Activated T-helper 2 cell treated with anti-CD3 and anti-CD28 coated beads, Interferon-gamma antibody, Interleukin-2, Interleukin-4, amounts not matched to agents 10 μg/mL and 5 μg/mL and 100 μg/mL, durations not matched to agents 14 hours and 24 hours and 36 hours (primary cell): ENCODE measurements at regions of chr1 and their contacts with region 1.

Region 1: GRCh38 chr1:228794173-228794572 is 58.9 kb downstream of the RHOU start:
- DNase-seq: peak; percentile 45
- H3K4me3 Mint-ChIP-seq: no peak overlapping the region
- H3K27ac Mint-ChIP-seq: no peak overlapping the region
- H3K4me1 Mint-ChIP-seq: peaks cover 24% of the 10 kb centered on the region
- H3K27me3 Mint-ChIP-seq: no peaks in the 10 kb centered on the region

Region 2: DNA sequence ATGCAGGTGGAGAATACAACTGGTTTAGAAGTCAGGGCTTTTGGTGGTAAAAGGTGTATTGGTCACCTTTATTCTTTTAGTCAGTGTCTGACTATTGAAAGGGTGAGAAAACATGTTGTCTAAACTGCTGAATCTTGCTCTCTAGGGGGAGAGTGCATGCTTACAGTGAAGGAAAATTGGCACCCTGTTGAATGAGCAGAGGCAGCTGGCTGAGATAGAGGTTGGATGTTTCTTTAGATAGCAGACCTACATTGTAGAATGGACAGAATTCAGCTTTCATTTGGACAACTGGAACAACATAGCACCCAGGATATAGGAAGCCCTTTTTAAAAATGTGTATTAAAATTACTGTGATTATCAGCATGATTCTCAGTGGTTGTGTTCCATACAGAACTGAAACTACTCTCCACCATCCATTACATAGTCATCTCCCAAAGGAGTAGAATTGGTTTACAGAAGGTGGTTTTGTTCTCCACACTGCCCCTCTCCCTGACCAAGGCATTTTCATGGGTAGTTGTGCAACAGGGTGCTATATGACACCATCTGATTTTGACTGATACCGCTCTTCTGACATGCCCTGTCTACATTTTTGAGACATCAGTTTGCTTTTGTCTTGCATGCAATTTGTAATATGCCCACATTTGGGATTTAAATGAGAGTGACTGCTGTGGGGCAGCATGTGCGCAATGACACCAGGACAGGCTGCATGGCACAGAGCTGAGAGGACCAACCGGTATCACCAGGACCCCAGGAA is 42.6 kb before region 1 on chr1:
- intact Hi-C with region 1: loop called (anchors 1 kb)
- DNase-seq: no peak
- H3K4me3 Mint-ChIP-seq: no peak overlapping the region
- H3K27ac Mint-ChIP-seq: no peak overlapping the region
- H3K4me1 Mint-ChIP-seq: peaks cover 38% of the 10 kb centered on the region
- H3K27me3 Mint-ChIP-seq: peaks cover 31% of the 10 kb centered on the region

Region 3: DNA sequence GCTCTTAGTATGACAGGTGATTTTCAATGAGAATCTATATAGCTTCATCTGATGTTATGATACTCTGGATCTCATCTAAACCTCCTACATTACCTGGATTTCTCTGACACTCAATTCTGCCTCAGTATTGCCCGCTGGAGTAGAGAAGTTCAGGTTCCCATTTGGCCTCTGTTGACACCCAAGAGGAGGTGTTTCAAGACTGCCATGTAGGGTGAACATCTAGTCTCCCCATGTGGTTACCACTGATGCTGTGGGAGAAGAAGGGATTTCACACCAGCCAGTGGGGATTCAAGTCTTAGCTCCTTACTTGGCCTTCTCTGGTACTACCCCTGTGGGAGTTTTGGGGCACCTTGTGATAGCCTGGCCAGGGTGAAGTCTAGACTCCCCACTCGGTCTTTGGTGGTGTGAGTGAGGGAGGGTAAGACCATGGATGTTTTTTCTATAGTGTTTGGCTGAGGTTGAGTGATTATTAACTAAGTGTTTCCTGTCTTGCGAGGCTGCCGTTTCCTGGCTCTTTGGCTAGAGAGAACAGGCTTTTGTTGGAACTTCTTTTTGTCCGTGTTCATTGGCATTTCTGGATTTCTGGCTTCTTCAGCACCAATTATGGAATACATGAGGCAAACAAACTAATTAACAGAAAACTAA is 31.8 kb after region 1 on chr1:
- intact Hi-C with region 1: loop called (anchors 5 kb)
- DNase-seq: no peak
- H3K4me3 Mint-ChIP-seq: no peak overlapping the region
- H3K27ac Mint-ChIP-seq: no peak overlapping the region
- H3K4me1 Mint-ChIP-seq: peaks cover 19% of the 10 kb centered on the region
- H3K27me3 Mint-ChIP-seq: peaks cover 28% of the 10 kb centered on the region

Region 4: DNA sequence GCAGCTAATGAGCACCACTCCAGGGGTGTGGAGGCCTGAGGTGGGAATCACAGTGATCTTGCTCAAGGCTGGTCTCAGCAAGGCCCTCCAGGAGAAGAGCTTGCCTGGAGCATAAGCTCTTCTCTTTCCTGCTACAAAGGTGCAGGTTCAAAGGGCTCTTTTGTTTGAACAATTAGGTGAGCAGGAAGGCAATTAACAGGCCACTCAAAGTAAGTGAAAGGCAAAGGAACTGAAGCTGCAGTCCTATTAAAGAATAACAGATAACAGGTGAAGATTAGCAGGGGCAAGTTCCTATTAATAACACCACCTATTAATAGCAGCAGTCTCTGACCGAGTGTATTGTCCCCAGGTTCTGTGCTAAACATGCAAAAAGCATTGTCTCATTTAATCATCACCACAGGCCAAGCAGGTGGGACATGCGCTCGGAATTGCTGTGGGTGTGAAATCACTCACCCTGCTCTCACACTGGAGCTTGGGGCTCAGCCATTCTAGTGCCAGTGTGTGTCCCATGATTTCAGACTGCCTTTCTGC is 54.9 kb after region 1 on chr1:
- intact Hi-C with region 1: no loop called
- DNase-seq: no peak
- H3K4me3 Mint-ChIP-seq: no peak overlapping the region
- H3K27ac Mint-ChIP-seq: no peak overlapping the region
- H3K4me1 Mint-ChIP-seq: no peaks in the 10 kb centered on the region
- H3K27me3 Mint-ChIP-seq: peaks cover 24% of the 10 kb centered on the region

Region 5: DNA sequence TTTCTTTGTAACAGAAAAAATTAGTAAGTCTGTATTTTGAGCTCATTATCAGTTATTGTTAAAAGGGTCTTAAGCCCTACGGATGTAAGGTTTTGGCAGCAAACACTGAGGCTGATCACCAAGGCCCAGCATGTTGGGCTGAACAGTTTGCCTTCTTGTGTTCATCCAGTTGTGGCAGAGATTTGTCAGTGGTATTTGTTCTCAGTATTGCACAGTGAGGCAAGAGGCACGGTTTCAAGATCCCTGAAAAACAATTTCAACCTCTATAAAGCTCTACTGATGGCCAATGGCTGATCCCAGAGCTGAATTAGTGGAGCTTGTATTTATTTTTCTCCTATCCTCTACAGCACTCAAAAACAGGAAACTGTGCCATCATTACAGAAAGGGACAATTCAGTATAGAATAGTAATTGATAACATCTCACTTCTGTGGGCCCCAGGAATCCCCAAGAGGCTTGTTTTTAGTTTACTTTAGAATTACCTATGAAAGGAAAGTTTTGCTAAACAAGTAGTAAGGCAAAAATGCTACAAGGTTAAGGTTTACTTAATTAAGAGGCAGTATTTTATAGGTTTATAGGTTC is 284.9 kb after region 1 on chr1:
- intact Hi-C with region 1: loop called (anchors 1 kb)
- DNase-seq: no peak
- H3K4me3 Mint-ChIP-seq: no peak overlapping the region
- H3K27ac Mint-ChIP-seq: no peak overlapping the region
- H3K4me1 Mint-ChIP-seq: peaks cover 7% of the 10 kb centered on the region
- H3K27me3 Mint-ChIP-seq: peaks cover 17% of the 10 kb centered on the region

Region 6: DNA sequence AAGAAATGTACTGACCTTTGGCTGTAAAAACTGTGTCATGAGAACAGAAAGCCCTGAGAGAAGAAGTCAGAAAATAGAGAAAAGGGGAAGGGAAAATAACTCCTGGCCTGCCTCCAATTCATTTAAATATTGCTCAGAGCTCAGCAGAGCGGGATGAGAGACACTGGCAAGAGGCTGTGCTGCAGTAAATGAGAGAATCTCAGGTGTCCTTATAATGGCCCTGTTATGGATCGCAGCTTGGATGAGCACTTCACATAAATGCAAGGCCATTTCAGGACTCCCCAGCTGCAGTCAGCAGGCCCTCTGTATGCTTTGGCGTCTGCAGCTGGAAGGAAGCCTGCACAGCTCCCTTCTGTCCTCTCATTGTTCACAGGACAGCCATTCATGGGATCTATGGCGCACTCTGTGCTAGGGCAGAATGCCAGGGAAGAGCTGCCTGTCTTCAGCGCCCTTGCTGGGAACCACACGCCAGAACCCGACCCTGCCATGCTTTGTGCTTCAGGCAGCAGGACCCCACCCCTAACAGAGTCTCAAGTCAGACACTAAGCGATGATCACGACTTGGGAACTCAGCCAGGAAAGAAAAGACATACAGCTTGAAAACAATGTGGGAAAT is 785.0 kb after region 1 on chr1:
- intact Hi-C with region 1: no loop called
- DNase-seq: no peak
- H3K4me3 Mint-ChIP-seq: no peak overlapping the region
- H3K27ac Mint-ChIP-seq: no peak overlapping the region
- H3K4me1 Mint-ChIP-seq: peaks cover 3% of the 10 kb centered on the region
- H3K27me3 Mint-ChIP-seq: peaks cover 17% of the 10 kb centered on the region

Region 7: GRCh38 chr1:230104395-230105244 is 1310.4 kb after region 1 on chr1:
- intact Hi-C with region 1: loop called (anchors 5 kb)
- DNase-seq: peak; percentile 29
- H3K4me3 Mint-ChIP-seq: peak overlapping the region; percentile 38
- H3K27ac Mint-ChIP-seq: peak overlapping the region; percentile 83
- H3K4me1 Mint-ChIP-seq: peaks cover 85% of the 10 kb centered on the region
- H3K27me3 Mint-ChIP-seq: no peaks in the 10 kb centered on the region